CD4-positive, alpha-beta memory T cell (primary cell): ENCODE measurements at regions of chr22 and their contacts with region 1.

Region 1: GRCh38 chr22:31749636-31750364 is at the start of gene PRR14L:
- DNase-seq: peak; percentile 96 to 99 (median 96)
- H3K4me3 ChIP-seq: peak within 1 kb of the TSS; percentile 24 to 87
- H3K4me3 Mint-ChIP-seq: peak within 1 kb of the TSS; percentile 92 to 100 (median 96)
- H3K27ac ChIP-seq: peak within 1 kb of the TSS; percentile 85
- H3K27ac Mint-ChIP-seq: peak within 1 kb of the TSS; percentile 93 to 97 (median 96)
- H3K4me1 ChIP-seq: peaks cover 48% of the 10 kb centered on the region
- H3K4me1 Mint-ChIP-seq: peaks cover 33 to 70% (median 50%) of the 10 kb centered on the region in 4 donors
- H3K27me3 ChIP-seq: no peaks in the 10 kb centered on the region
- H3K27me3 Mint-ChIP-seq: no peaks in the 10 kb centered on the region
- total RNA-seq, gene PRR14L: 70.7 to 72.6 TPM

Region 2: DNA sequence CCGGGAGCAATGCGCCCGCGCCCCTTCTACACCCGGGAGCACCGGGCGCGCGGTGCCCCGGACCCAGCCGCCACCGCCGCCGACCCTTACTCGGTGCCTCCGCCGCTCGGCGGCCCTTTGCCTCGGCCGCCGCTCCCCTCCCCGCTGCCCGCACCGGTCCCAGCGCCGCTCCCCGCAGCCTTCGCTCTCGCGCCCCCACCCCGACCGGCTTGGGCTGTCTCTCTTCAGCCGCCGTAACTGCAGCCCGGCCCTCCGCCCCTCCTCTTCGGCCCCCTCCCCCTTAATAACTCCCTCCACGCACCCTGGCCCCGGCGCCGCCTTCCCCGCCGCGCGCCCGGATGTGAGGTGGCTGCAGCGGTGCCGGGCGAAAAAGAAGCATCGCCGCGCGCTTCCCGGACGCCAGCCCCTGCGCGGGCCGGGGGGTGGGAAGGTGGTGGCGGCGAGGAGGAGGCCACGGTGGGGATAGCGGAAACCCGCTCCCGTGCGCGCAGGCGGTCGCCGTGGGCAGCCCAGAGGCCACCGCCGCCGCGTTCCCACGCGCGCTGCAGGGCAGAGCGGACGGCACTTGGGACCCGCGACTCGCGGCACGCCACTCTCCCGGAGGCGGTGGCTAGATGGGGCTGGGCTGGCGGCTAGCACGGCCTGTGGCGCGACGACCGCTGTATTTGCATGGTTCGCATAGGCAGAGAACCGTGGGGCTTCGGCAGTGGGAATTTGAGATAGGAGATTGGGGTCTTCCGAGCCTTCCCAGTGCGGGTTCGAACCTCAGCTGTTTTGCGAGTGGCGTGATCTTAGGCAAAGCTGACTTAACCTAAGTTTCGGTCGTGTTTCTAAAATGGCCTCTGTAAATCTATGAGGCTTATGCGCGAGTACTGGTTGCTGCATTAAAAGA is 259.9 kb before region 1 on chr22 and contains the start of gene EIF4ENIF1:
- CTCF ChIA-PET with region 1: no interaction called
- POLR2A ChIA-PET with region 1: no interaction called
- intact Hi-C with region 1: loop called (anchors 1 kb)
- DNase-seq: peak; percentile 88 to 91 (median 89)
- H3K4me3 ChIP-seq: peak within 1 kb of the TSS; percentile 70 to 77
- H3K4me3 Mint-ChIP-seq: peak within 1 kb of the TSS; percentile 92 to 99 (median 96)
- H3K27ac ChIP-seq: peak within 1 kb of the TSS; percentile 87
- H3K27ac Mint-ChIP-seq: peak within 1 kb of the TSS; percentile 94 to 99 (median 96)
- H3K4me1 ChIP-seq: peaks cover 52% of the 10 kb centered on the region
- H3K4me1 Mint-ChIP-seq: peaks cover 29 to 54% (median 39%) of the 10 kb centered on the region in 4 donors
- H3K27me3 ChIP-seq: no peaks in the 10 kb centered on the region
- H3K27me3 Mint-ChIP-seq: no peaks in the 10 kb centered on the region
- total RNA-seq, gene EIF4ENIF1: 41.9 to 50.7 TPM

Region 3: GRCh38 chr22:31676700-31677099 is 73.1 kb before region 1 on chr22:
- CTCF ChIA-PET with region 1: no interaction called
- POLR2A ChIA-PET with region 1: interaction called, 27 read pairs
- intact Hi-C with region 1: loop called (anchors 2 kb)
- DNase-seq: peak; percentile 89 to 94 (median 89)
- H3K4me3 ChIP-seq: peak overlapping the region; percentile 65 to 80
- H3K4me3 Mint-ChIP-seq: peak overlapping the region; percentile 92 to 100 (median 96)
- H3K27ac ChIP-seq: peak overlapping the region; percentile 76
- H3K27ac Mint-ChIP-seq: peak overlapping the region; percentile 91 to 100 (median 97)
- H3K4me1 ChIP-seq: peaks cover 3% of the 10 kb centered on the region
- H3K4me1 Mint-ChIP-seq: peaks cover 10 to 13% (median 12%) of the 10 kb centered on the region in 4 donors
- H3K27me3 ChIP-seq: no peaks in the 10 kb centered on the region
- H3K27me3 Mint-ChIP-seq: no peaks in the 10 kb centered on the region

Region 4: DNA sequence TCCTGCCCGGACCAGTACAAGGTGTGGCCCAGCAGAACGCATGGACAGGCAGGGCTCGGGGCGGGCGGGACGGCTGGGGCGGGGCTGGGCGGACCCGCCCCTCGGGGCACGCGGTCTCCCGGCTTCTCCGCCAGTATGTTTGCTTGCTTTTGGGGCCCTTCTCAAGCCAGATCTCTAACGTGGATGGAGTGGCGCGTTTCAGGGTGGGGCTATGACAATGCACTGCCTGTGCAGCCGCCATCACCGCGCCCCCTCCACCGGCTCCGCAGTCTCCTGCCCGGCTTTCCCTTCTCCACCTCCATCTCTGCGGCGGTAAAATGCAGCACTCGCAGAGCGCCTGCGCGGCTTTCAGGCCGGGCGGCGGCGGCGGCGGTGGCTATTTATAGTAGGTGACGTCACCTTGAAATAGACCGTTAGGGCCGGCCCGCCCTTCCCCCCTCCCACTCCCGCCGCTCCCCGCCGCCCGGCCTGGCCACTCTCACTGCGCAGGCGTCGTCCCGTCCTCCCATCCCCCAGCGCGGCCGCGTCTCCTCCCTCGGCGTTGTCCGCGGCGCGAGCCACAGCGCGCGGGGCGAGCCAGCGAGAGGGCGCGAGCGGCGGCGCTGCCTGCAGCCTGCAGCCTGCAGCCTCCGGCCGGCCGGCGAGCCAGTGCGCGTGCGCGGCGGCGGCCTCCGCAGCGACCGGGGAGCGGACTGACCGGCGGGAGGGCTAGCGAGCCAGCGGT is 194.3 kb after region 1 on chr22 and contains the start of gene YWHAH:
- CTCF ChIA-PET with region 1: no interaction called
- POLR2A ChIA-PET with region 1: interaction called, 14 read pairs
- intact Hi-C with region 1: loop called (anchors 1 kb)
- DNase-seq: peak; percentile 86 to 89 (median 86)
- H3K4me3 ChIP-seq: peak within 1 kb of the TSS; percentile 55 to 67
- H3K4me3 Mint-ChIP-seq: peak within 1 kb of the TSS; percentile 91 to 97 (median 94)
- H3K27ac ChIP-seq: peak within 1 kb of the TSS; percentile 77
- H3K27ac Mint-ChIP-seq: peak within 1 kb of the TSS in 6 of 7 donors; percentile 94 to 98 (median 96)
- H3K4me1 ChIP-seq: peaks cover 33% of the 10 kb centered on the region
- H3K4me1 Mint-ChIP-seq: peaks cover 10 to 25% (median 17%) of the 10 kb centered on the region in 4 donors
- H3K27me3 ChIP-seq: no peaks in the 10 kb centered on the region
- H3K27me3 Mint-ChIP-seq: no peaks in the 10 kb centered on the region
- total RNA-seq, gene YWHAH: 48.0 to 57.0 TPM

Region 5: DNA sequence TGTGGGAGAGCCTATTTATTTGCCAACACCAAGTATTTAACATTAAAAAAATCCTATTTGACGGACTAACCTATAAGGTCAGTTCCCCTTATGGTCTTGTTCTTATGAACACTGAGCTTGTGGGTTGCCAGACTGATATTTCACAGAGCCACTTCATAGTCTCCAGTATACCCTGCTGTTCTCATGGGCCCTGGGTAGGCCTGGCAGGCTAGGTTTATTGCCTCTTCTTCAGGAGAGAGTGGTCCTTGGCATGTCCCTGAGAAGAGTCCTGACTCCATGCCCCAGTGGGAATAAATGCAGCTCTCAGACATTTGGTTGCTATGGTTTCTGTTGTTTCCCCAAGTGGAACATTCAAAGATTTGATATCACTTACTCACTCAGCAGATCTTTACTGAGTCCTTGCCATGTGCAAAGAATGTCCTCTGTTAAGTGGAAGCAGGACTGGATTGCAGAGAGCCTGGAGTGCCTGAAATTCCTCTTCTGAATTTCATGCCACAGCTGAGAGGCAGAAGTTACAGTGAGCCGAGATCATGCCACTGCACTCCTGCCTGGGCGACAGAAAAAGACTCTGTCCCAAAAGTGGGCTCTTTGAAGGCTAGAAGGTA is 309.0 kb after region 1 on chr22:
- CTCF ChIA-PET with region 1: no interaction called
- POLR2A ChIA-PET with region 1: no interaction called
- intact Hi-C with region 1: no loop called
- DNase-seq: no peak
- H3K4me3 ChIP-seq: no peak overlapping the region
- H3K4me3 Mint-ChIP-seq: no peak overlapping the region
- H3K27ac ChIP-seq: no peak overlapping the region
- H3K27ac Mint-ChIP-seq: no peak overlapping the region
- H3K4me1 ChIP-seq: no peaks in the 10 kb centered on the region
- H3K4me1 Mint-ChIP-seq: no peaks in the 10 kb centered on the region
- H3K27me3 ChIP-seq: peaks cover 5% of the 10 kb centered on the region
- H3K27me3 Mint-ChIP-seq: peaks cover 6 to 20% of the 10 kb centered on the region in 2 donors